HepG2 (cell line): ENCODE measurements at regions of chr1 and their contacts with region 1.

Region 1: GRCh38 chr1:170659399-170660035 is 4.4 kb upstream of the PRRX1 start:
- DNase-seq: no peak
- ATAC-seq: no peak
- H3K4me3 ChIP-seq: no peak overlapping the region
- H3K27ac ChIP-seq: no peak overlapping the region
- H3K4me1 ChIP-seq: no peaks in the 10 kb centered on the region
- H3K27me3 ChIP-seq: peaks cover 0 to 36% of the 10 kb centered on the region in 2 experiments; a peak in 2 of 5 replicates
- CTCF ChIP-seq: no peak
- EP300 ChIP-seq: no peak
- POLR2A ChIP-seq: no peak
- RAD21 ChIP-seq: no peak

Region 2: GRCh38 chr1:170604065-170604464 is 55.5 kb before region 1 on chr1:
- CTCF ChIA-PET with region 1: no interaction called
- POLR2A ChIA-PET with region 1: no interaction called
- in situ Hi-C with region 1: no loop called
- intact Hi-C with region 1: no loop called
- DNase-seq: no peak
- ATAC-seq: no peak
- H3K4me3 ChIP-seq: no peak overlapping the region
- H3K27ac ChIP-seq: no peak overlapping the region
- H3K4me1 ChIP-seq: no peaks in the 10 kb centered on the region
- H3K27me3 ChIP-seq: no peaks in the 10 kb centered on the region
- CTCF ChIP-seq: no peak
- EP300 ChIP-seq: no peak
- POLR2A ChIP-seq: no peak
- RAD21 ChIP-seq: no peak

Region 3: GRCh38 chr1:170687621-170688020 is 28.1 kb after region 1 on chr1:
- CTCF ChIA-PET with region 1: no interaction called
- POLR2A ChIA-PET with region 1: no interaction called
- in situ Hi-C with region 1: no loop called
- intact Hi-C with region 1: loop called (anchors 1 kb)
- DNase-seq: no peak
- ATAC-seq: no peak
- H3K4me3 ChIP-seq: no peak overlapping the region
- H3K27ac ChIP-seq: no peak overlapping the region
- H3K4me1 ChIP-seq: no peaks in the 10 kb centered on the region
- H3K27me3 ChIP-seq: 0 out of 5 replicates have a peak, but pooled peaks cover 0 to 5% of the 10 kb centered on the region in 2 experiments
- CTCF ChIP-seq: no peak
- EP300 ChIP-seq: no peak
- POLR2A ChIP-seq: no peak
- RAD21 ChIP-seq: no peak